Dorsolateral prefrontal cortex (tissue), 120 donors: ENCODE measurements at regions of chr6 and their contacts with region 1.

Region 1: GRCh38 chr6:83708970-83709747 is at the start of gene SNAP91:
- DNase-seq: peak; percentile 61 to 91 (median 86)
- H3K4me3 ChIP-seq: peak within 1 kb of the TSS; percentile 53 to 91 (median 78)
- H3K27ac ChIP-seq: peak within 1 kb of the TSS in 58 of 59 donors; percentile 42 to 93 (median 83)
- H3K27me3 ChIP-seq: no peaks in the 10 kb centered on the region
- CTCF ChIP-seq: peak in 2 of 56 donors; percentile 12 to 19
- total RNA-seq, gene SNAP91: 75.1 to 334 (median 237) TPM

Region 2: DNA sequence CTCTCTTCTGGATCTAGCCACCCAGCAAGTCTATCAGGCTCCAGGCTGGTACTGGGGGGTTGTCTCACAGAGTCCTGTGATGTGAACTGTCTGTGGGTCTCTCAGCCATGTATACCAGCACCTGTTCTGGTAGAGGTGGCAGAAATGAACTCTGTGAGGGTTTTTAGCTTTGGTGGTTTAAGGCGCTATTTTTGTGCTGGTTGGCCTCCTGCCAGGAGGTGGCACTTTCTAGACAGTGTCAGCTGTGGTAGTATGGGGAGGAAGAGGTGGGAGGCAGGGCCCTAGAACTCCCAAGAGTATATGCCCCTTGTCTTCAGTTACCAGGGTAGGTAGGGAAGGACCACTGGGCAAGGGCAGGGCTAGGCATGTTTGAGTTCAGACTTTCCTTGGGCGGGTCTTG is 76.0 kb before region 1 on chr6:
- intact Hi-C with region 1: no loop called
- DNase-seq: no peak
- H3K4me3 ChIP-seq: no peak overlapping the region
- H3K27ac ChIP-seq: no peak overlapping the region
- H3K27me3 ChIP-seq: no peaks in the 10 kb centered on the region
- CTCF ChIP-seq: no peak

Region 3: DNA sequence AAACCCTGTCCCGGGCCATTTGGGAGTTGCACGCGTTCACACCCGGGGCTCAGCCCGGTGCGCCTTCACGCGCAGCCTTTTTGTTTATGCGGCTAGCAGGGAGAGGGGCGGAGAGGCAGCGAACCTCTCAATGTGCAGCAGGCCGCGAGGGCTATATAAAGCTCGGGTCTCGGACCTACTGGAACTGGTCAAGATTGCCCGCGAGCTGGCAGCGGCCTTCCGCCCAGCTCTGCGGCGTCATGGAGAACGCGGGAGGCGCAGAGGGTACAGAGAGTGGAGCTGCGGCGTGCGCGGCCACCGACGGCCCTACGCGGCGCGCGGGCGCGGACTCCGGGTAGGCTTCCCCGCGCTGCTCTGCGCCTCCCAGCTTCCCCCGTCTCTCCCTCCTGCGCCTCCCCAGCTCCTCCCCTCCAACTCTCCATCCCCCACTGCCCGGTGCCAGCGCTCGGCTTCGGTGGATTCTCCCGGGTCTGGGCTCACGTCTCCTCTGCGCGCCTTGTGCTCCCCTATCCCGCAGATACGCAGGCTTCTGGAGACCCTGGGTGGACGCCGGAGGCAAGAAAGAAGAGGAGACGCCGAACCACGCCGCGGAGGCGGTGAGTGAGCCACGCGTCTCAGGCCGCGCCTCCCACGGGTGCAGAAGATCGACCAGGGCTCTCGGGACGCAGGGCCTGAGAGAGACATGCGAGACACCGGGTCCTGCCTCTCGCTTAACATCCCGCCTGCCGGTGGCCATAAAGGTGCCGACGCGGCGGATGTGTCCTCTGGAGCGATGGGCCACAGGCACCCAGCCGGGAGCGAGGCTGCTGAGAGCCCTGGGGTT is 144.2 kb after region 1 on chr6 and contains the start of gene RIPPLY2:
- intact Hi-C with region 1: loop called (anchors 2 kb)
- DNase-seq: peak; percentile 49 to 85 (median 77)
- H3K4me3 ChIP-seq: peak within 1 kb of the TSS; percentile 53 to 89 (median 74)
- H3K27ac ChIP-seq: peak within 1 kb of the TSS; percentile 36 to 97 (median 89)
- H3K27me3 ChIP-seq: no peaks in the 10 kb centered on the region
- CTCF ChIP-seq: peak in 9 of 56 donors; percentile 10 to 31 (median 19)
- total RNA-seq, gene RIPPLY2: 6.4 to 27.6 (median 16.4) TPM

Region 4: DNA sequence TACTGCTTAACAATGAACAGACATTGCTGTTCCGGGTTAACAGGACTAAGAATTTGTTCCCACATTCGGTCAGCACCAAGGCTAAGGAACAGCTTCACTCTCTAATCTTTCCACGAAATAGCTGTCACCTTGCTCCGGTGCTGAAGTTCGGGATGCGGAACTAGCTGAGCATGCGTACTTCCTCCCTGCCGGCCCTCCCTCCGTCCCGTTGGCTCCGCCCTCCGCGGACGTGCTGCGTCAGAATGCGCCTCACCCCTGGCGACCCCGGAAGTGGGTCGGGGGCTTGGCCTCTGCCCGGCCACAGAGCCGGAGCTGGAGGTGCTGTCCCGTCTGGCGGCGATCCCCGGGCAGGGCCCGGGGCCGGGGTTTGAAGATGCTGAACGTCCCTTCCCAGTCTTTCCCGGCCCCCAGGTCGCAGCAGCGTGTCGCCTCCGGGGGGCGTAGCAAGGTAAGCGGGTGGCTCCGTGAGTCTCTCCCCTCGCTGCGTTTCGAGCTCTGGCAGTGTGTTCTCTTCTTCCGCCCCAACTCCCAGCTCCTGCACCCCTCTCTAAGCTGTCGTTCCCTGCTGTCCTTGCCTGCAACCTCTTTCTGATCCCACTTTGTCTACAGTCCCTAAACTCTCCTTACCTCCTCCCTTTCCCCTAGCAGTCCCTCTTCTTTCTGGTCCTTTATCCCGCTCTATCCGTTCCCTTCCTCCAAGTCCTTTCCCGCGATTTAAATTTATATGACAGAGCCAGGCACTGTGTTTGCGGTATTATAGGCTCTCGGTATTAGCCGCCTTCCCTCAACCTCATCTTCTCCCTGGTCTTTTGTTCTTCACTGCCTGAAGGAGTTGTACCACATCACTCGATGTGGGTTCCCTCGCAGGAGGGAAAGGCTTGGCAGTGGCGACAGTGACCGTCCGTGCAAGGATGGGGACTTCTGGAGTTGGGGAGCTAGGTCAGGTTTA is 150.5 kb after region 1 on chr6 and contains the start of gene CYB5R4:
- intact Hi-C with region 1: loop called in 1 of 2 experiments (anchors 2 kb)
- DNase-seq: peak; percentile 87 to 96 (median 92)
- H3K4me3 ChIP-seq: peak within 1 kb of the TSS; percentile 72 to 98 (median 87)
- H3K27ac ChIP-seq: peak within 1 kb of the TSS; percentile 13 to 94 (median 85)
- H3K27me3 ChIP-seq: no peaks in the 10 kb centered on the region
- CTCF ChIP-seq: peak in 53 of 56 donors; percentile 8 to 75 (median 58)
- total RNA-seq, gene CYB5R4: 8.4 to 26.5 (median 18.4) TPM